Activated CD8-positive, alpha-beta T cell treated with anti-CD3 and anti-CD28 coated beads, Interleukin-2, amount 10 ng/mL, durations not matched to agents 7 days and 5 days (primary cell): ENCODE measurements at regions of chr3 and their contacts with region 1.

Region 1: DNA sequence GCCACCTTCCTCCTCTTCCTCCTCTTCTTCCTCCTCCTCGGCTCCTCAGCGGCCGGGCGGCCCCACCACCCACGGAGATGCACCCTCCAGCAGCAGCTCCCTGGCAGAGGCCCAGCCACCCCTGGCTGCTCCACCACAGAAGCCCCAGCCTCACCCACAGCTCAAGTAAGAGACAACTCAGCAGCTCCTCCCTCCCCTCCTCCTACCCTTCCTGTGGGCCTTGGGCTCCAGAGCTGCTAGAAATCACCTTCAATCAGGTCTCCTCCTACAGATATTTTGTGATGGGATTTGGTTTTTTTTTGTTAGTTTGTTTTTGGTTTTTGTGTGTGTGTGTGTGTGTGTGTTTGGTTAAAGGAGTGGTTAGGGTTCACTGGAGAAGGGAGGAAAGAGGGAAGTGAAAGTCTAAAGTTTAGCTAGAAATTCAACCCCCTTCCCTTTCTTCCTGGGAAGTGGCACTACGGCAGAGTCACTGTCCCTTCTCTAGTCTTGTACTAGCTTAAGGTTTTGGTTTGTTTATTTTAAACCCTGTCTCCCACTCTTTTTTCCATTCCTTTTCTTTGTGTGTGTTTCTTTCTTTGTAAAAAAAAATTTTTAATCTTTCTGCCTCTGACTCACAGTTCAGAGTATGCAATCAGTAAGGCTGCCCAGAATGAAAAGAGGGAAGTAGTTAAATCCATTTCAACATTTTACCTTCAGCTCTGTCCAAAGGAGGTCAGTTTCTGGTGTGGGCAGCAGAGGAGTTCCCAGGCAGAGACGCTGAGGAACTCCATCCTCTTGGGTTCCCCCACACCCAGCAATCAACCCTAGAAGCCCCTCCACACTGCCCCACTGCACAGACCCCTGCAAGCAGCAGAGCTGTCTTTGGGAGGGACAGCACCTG is 29.0 kb upstream of the TIMP4 start:
- DNase-seq: peak; percentile 63
- ATAC-seq: peak; percentile 71
- H3K4me3 Mint-ChIP-seq: no peak overlapping the region
- H3K27ac Mint-ChIP-seq: peak overlapping the region; percentile 56
- H3K4me1 Mint-ChIP-seq: peaks cover 19% of the 10 kb centered on the region
- H3K27me3 Mint-ChIP-seq: no peaks in the 10 kb centered on the region

Region 2: GRCh38 chr3:12175844-12176453 is 11.7 kb before region 1 on chr3:
- CTCF ChIA-PET with region 1: interaction called, 11 read pairs
- POLR2A ChIA-PET with region 1: interaction called, 3 read pairs
- DNase-seq: peak; percentile 28
- ATAC-seq: peak; percentile 64
- H3K4me3 Mint-ChIP-seq: no peak overlapping the region
- H3K27ac Mint-ChIP-seq: no peak overlapping the region
- H3K4me1 Mint-ChIP-seq: peaks cover 2% of the 10 kb centered on the region
- H3K27me3 Mint-ChIP-seq: no peaks in the 10 kb centered on the region